OCI-LY7 (cell line): ENCODE measurements at regions of chr13 and their contacts with region 1.

Region 1: GRCh38 chr13:91639316-91639715 is 240.9 kb downstream of the GPC5 start:
- DNase-seq: no peak
- H3K4me3 ChIP-seq: no peak overlapping the region
- H3K27ac ChIP-seq: no peak overlapping the region
- H3K4me1 ChIP-seq: no peaks in the 10 kb centered on the region
- CTCF ChIP-seq: no peak

Region 2: DNA sequence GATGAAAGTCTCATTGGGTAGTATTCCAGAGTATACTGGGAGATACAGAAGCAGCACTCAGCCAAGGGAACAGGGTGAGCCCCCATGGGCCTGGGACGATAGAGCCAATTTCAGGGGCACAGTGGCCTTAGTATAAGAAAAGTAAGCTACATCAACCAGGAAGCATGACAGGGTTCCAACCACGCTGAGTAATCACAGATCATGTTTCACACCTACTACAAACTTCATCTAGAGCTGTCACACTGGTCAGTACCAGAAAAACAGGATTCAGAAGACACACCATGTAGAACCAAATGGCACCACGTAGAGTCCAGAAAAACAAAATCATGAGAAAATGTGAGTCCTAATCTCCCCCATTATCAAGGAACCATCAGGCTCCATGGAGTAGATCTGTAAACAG is 1584.2 kb before region 1 on chr13:
- CTCF ChIA-PET with region 1: no interaction called
- POLR2A ChIA-PET with region 1: no interaction called
- intact Hi-C with region 1: no loop called
- DNase-seq: no peak
- H3K4me3 ChIP-seq: no peak overlapping the region
- H3K27ac ChIP-seq: no peak overlapping the region
- H3K4me1 ChIP-seq: no peaks in the 10 kb centered on the region
- CTCF ChIP-seq: no peak

Region 3: GRCh38 chr13:91659256-91660075 is 20.1 kb after region 1 on chr13:
- CTCF ChIA-PET with region 1: no interaction called
- POLR2A ChIA-PET with region 1: interaction called, 14 read pairs
- intact Hi-C with region 1: no loop called
- DNase-seq: no peak
- H3K4me3 ChIP-seq: no peak overlapping the region
- H3K27ac ChIP-seq: no peak overlapping the region
- H3K4me1 ChIP-seq: no peaks in the 10 kb centered on the region
- CTCF ChIP-seq: no peak

Region 4: GRCh38 chr13:91693466-91693865 is 54.1 kb after region 1 on chr13:
- CTCF ChIA-PET with region 1: no interaction called
- POLR2A ChIA-PET with region 1: interaction called, 3 read pairs
- intact Hi-C with region 1: loop called (anchors 2 kb)
- DNase-seq: no peak
- H3K4me3 ChIP-seq: no peak overlapping the region
- H3K27ac ChIP-seq: no peak overlapping the region
- H3K4me1 ChIP-seq: no peaks in the 10 kb centered on the region
- CTCF ChIP-seq: no peak

Region 5: DNA sequence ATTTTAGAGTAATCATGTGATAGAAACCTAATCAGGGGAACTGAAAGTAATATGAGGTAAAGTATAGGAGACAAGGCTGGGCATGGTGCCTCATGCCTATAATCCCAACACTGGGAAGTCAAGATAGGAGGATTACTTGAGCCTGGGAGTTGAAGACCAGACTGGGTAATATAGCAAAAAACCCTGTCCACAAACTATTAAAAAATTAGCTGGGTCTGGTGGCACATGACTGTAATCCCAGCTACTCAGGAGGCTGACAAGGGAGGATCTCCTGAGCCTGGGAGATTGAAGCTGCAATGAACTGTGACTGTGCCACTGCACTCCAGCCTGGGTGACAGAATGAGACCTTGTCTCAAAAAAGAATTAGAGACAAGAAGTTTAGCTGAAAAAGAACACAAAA is 229.0 kb after region 1 on chr13:
- CTCF ChIA-PET with region 1: no interaction called
- POLR2A ChIA-PET with region 1: no interaction called
- intact Hi-C with region 1: no loop called
- DNase-seq: no peak
- H3K4me3 ChIP-seq: no peak overlapping the region
- H3K27ac ChIP-seq: no peak overlapping the region
- H3K4me1 ChIP-seq: no peaks in the 10 kb centered on the region
- CTCF ChIP-seq: no peak